ENCODE measurements at regions of chr1 and their contacts with region 1.

Region 1: GRCh38 chr1:153494976-153495535 is 34.6 kb upstream of the S100A7 start:
- DNase-seq: peak; percentile 86

Region 2: DNA sequence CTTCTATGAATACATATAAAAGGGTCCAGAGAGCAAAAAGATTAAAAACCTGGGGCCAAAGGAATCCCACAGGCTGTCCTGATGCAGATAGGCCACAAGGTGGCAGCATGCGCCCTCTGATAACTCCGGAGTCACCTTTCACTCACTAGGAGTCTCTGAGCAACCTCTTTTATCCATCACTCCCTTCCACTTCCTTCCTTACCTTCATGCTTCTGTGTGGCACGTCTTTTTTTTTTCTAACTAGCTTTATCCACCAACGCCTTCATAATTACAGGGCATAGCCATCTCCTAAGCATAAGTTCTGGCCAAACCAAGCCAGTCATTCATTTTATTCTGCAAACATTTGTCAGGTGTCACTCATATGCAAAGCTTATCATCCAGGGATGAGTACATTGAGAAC is 142.5 kb before region 1 on chr1:
- intact Hi-C with region 1: loop called (anchors 1 kb)
- DNase-seq: no peak

Region 3: GRCh38 chr1:153395136-153395685 is 99.8 kb before region 1 on chr1:
- intact Hi-C with region 1: loop called (anchors 5 kb)
- DNase-seq: no peak

Measured in cardiac septum (tissue), 1 donor.